ENCODE measurements at regions of chr13 and their contacts with region 1.

Region 1: DNA sequence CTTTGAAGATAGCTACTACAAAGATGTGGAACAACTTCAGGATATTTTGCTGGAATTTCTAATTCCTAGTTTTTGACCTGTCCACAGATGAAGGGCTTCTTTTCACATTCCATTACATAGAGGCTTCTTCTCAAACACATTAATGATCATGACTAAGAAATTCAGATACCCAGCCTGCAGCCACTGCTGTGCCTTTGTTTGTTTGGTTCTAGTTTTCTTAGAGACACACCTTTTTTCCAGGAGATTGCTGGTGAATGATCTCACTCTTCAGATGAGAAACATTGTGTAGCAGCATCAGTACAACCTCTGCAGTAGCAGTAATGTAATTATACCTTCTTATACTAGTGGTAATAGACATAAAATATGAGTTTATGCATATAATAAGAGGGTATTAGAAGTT is 5.0 kb downstream of the TDRD3 start:
- DNase-seq: no peak
- ATAC-seq: no peak
- H3K4me3 ChIP-seq: no peak overlapping the region
- H3K27ac ChIP-seq: no peak overlapping the region
- H3K4me1 ChIP-seq: peaks cover 8% of the 10 kb centered on the region
- H3K27me3 ChIP-seq: no peaks in the 10 kb centered on the region
- CTCF ChIP-seq: no peak

Region 2: DNA sequence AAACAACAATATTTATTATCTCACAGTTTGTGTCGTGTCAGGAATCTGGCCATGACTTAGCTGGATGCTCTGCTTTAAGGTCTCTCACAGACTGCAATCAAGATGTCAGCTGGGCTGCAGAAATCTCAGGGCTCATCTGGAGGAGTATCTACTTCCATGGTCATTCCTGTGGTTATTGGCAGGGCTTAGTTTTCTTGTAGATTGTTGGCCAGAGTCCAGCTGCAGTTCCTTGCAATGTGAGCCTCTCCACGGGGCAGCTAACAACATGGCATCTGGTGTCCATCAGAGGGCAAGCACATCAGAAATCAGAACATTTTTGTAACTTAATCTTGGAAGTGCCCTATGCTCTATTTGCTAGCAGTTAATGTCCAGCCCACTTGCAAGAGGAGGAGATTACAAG is 50.7 kb before region 1 on chr13:
- CTCF ChIA-PET with region 1: no interaction called
- POLR2A ChIA-PET with region 1: interaction called, 10 read pairs
- in situ Hi-C with region 1: no loop called
- intact Hi-C with region 1: no loop called
- DNase-seq: no peak
- ATAC-seq: no peak
- H3K4me3 ChIP-seq: no peak overlapping the region
- H3K27ac ChIP-seq: no peak overlapping the region
- H3K4me1 ChIP-seq: no peaks in the 10 kb centered on the region
- H3K27me3 ChIP-seq: no peaks in the 10 kb centered on the region
- CTCF ChIP-seq: no peak